ENCODE measurements at regions of chr3 and their contacts with region 1.

Region 1: GRCh38 chr3:132343018-132343612 is 25.9 kb downstream of the ACP3 start:
- DNase-seq: peak; percentile 69
- H3K4me3 Mint-ChIP-seq: no peak overlapping the region
- H3K27ac Mint-ChIP-seq: no peak overlapping the region
- H3K4me1 Mint-ChIP-seq: peaks cover 19% of the 10 kb centered on the region
- H3K27me3 Mint-ChIP-seq: no peaks in the 10 kb centered on the region
- CTCF ChIP-seq: peak; percentile 85

Region 2: GRCh38 chr3:132222868-132223538 is 120.1 kb before region 1 on chr3:
- CTCF ChIA-PET with region 1: interaction called, 11 read pairs
- POLR2A ChIA-PET with region 1: no interaction called
- intact Hi-C with region 1: no loop called
- DNase-seq: peak; percentile 48
- H3K4me3 Mint-ChIP-seq: no peak overlapping the region
- H3K27ac Mint-ChIP-seq: no peak overlapping the region
- H3K4me1 Mint-ChIP-seq: peaks cover 4% of the 10 kb centered on the region
- H3K27me3 Mint-ChIP-seq: no peaks in the 10 kb centered on the region
- CTCF ChIP-seq: no peak

Region 3: DNA sequence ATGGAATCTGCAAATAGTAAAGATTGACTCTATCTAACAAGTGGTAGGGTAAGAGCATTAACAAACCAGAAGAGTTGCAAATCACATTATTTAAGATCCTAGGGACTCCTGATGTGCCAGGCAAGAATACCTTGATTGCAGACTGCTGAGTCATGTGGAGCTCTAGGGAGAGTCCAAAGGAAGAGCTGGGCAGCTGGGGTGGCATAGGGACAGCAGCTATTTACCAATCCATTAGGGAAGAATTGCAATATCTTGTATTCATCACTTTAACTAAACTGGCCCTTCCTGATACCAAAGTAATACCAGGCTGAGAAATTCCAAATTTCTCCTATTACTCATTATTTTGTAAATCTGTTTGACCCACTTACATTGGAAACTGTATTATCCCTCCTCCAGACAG is 78.1 kb before region 1 on chr3:
- CTCF ChIA-PET with region 1: interaction called, 221 read pairs
- POLR2A ChIA-PET with region 1: no interaction called
- intact Hi-C with region 1: no loop called
- DNase-seq: peak; percentile 38
- H3K4me3 Mint-ChIP-seq: no peak overlapping the region
- H3K27ac Mint-ChIP-seq: no peak overlapping the region
- H3K4me1 Mint-ChIP-seq: peaks cover 6% of the 10 kb centered on the region
- H3K27me3 Mint-ChIP-seq: no peaks in the 10 kb centered on the region
- CTCF ChIP-seq: no peak

Region 4: DNA sequence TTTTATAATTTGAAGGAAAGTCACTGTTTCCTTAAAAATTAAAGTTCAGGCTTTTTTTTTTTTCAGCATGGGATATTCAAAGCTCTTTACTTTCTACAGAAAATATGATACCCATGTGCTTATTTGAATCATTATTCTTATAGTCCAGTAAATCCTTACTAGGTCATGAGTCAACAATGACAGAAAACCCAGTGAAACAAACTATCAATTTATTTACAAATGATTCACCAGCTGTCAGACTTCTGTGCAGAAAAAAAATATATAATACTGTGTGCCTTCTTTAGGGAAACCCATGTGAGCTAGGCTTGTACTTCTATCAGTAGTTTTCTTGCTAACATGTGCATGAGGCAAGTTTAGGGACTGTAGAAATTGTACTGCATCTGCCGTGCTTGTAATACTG is 24.7 kb before region 1 on chr3:
- CTCF ChIA-PET with region 1: interaction called, 20 read pairs
- POLR2A ChIA-PET with region 1: no interaction called
- intact Hi-C with region 1: no loop called
- DNase-seq: peak; percentile 17
- H3K4me3 Mint-ChIP-seq: no peak overlapping the region
- H3K27ac Mint-ChIP-seq: peak overlapping the region; percentile 72
- H3K4me1 Mint-ChIP-seq: peaks cover 19% of the 10 kb centered on the region
- H3K27me3 Mint-ChIP-seq: no peaks in the 10 kb centered on the region
- CTCF ChIP-seq: no peak

Region 5: GRCh38 chr3:132332508-132332907 is 10.6 kb before region 1 on chr3:
- CTCF ChIA-PET with region 1: interaction called, 33 read pairs
- POLR2A ChIA-PET with region 1: interaction called, 3 read pairs
- intact Hi-C with region 1: no loop called
- DNase-seq: no peak
- H3K4me3 Mint-ChIP-seq: no peak overlapping the region
- H3K27ac Mint-ChIP-seq: no peak overlapping the region
- H3K4me1 Mint-ChIP-seq: no peaks in the 10 kb centered on the region
- H3K27me3 Mint-ChIP-seq: no peaks in the 10 kb centered on the region
- CTCF ChIP-seq: no peak

Region 6: DNA sequence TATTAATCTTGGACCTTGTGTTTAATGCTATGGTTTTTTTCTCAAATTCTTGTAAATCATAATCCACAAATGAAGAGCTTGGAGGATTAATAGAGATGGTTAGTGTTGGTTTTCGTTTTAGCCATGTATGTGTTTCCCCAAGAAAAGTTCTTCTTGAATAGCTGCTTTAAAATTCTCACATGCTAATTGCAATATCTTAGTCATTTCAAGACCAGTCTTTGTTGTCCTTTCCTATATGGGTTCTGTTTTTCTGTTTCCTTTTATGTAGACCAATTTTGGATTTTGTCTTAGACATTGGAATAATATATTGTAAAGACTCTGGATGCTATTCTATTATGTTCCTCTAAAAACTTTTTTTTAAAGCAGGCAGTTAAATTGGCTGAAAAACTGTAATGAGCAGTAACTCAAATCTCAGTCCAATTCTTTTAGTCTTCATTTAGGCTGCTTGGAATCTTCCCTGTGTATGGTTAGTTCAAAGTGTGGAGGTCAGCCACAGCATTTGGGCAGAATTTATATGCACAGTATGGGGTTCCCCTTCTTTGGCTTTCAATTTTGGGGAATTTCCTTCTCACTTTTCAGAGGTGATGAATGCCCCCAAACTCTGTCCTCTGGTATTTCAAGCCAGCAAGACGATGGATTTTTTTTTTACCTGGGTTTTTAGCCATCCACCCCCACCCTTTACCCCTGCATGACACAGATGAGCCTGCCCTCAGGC is 35.1 kb after region 1 on chr3:
- CTCF ChIA-PET with region 1: no interaction called
- POLR2A ChIA-PET with region 1: no interaction called
- intact Hi-C with region 1: no loop called
- DNase-seq: no peak
- H3K4me3 Mint-ChIP-seq: no peak overlapping the region
- H3K27ac Mint-ChIP-seq: no peak overlapping the region
- H3K4me1 Mint-ChIP-seq: no peaks in the 10 kb centered on the region
- H3K27me3 Mint-ChIP-seq: no peaks in the 10 kb centered on the region
- CTCF ChIP-seq: no peak

Region 7: DNA sequence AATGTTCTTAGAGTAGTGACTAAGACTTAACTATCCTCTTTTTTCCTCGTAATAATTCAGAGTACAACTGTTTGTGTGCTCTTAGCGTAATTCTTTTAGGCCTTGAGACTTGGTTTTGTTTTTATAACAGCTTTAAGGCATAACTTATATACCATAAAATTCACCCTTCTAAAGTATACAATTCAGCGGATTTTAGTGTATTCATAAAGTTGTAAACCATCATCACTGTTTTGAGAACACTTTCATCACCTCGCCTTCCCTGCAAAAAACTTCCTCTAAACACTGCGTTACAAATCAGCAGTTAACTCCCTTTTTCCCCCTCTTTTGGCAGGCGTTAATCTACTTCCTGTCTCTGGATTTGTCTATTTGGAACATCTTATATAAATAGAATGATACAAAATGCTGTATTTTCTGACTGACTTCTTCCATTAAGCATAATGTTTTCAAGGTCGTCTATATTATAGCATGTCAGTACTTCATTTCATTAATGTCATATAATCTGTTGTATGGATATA is 92.9 kb after region 1 on chr3:
- CTCF ChIA-PET with region 1: no interaction called
- POLR2A ChIA-PET with region 1: no interaction called
- intact Hi-C with region 1: no loop called
- DNase-seq: no peak
- H3K4me3 Mint-ChIP-seq: no peak overlapping the region
- H3K27ac Mint-ChIP-seq: no peak overlapping the region
- H3K4me1 Mint-ChIP-seq: peaks cover 10% of the 10 kb centered on the region
- H3K27me3 Mint-ChIP-seq: no peaks in the 10 kb centered on the region
- CTCF ChIP-seq: no peak

Region 8: DNA sequence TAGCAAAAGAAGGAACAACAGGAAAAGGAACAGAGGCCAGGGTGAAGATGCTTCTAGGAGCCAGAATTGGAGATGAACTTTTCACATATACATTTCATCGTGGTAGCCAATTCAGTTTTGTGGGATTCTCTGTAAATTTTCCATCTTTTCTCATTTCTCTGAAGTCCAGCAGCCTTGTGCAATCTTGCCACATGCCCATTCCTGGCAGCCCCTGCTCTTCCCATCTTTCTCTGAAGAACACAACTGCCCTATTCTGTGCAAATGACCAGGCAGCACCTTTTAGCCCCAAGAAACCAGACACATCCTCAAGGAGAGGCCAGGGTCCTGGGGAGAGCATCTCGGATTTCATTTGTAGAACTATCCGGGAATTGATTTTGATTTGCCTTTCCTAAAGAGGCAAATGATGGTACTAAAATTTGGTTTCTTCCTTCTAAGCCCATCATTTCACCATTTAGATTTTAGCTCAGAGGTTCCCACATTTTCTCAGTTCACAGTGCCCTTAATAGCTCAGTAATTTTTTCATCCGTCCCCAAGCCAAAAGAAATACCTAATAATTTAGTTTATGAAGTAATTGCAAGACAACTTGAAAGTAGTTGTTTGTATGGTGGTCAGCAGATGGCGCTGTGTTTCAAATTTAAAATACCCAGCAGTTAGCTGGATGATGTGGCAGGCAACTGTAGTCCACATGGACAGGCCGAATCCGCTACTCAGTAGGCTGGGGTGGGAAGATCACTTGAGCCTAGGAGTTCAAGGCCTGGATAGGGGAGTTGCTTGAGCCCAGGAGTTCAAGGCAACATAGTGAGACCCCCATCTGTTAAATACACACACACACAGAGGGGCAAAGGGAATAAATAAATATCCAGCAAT is 192.7 kb after region 1 on chr3:
- CTCF ChIA-PET with region 1: no interaction called
- POLR2A ChIA-PET with region 1: no interaction called
- intact Hi-C with region 1: no loop called
- DNase-seq: peak; percentile 70
- H3K4me3 Mint-ChIP-seq: no peak overlapping the region
- H3K27ac Mint-ChIP-seq: no peak overlapping the region
- H3K4me1 Mint-ChIP-seq: peaks cover 4% of the 10 kb centered on the region
- H3K27me3 Mint-ChIP-seq: no peaks in the 10 kb centered on the region
- CTCF ChIP-seq: peak; percentile 50